ENCODE measurements at regions of chr2 and their contacts with region 1.

Region 1: DNA sequence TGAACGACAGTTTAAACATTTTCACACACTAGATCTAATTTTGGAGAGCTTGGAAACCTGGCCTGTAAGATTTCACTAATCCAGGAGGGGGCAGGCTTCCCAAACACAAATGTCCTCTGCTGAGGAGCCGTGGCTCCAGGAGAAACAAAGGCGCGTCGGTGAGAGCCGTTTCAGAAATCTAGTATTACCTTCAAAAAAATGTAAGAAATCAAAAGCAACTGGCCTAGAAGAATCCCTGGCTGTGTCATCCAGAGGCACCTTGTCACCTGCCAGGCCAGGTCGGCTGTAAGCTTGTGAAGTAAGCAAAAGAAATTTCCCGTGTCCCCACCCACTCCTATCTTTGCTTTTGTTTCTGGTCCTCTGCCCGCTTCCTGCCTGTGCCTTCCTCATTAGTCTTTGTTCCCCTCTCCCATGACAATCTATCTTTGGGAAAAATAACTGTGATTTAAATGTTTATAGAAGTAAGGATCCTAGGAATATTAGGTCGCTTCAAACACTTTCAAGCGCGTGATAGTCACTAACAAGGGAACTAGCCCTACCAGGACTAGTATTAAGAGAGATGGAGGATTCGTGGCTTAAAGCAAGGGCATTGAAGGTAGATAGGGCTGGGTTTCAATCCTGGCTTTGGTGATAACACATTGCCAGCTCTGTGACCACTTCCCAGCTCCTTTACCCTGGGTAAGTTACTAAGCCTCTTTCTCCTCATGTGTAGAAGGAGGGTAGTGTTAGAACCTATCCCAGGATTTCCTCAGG is 99.5 kb upstream of the STK39 start:
- DNase-seq: peak; percentile 80
- ATAC-seq: peak; percentile 85
- H3K4me3 Mint-ChIP-seq: peak overlapping the region; percentile 76
- H3K27ac Mint-ChIP-seq: peak overlapping the region; percentile 5
- H3K4me1 Mint-ChIP-seq: peaks cover 5% of the 10 kb centered on the region
- H3K27me3 Mint-ChIP-seq: peaks cover 3% of the 10 kb centered on the region

Region 2: GRCh38 chr2:168090366-168091135 is 256.4 kb before region 1 on chr2:
- CTCF ChIA-PET with region 1: no interaction called
- POLR2A ChIA-PET with region 1: no interaction called
- DNase-seq: no peak
- ATAC-seq: no peak
- H3K4me3 Mint-ChIP-seq: no peak overlapping the region
- H3K27ac Mint-ChIP-seq: no peak overlapping the region
- H3K4me1 Mint-ChIP-seq: peaks cover 20% of the 10 kb centered on the region
- H3K27me3 Mint-ChIP-seq: no peaks in the 10 kb centered on the region

Region 3: GRCh38 chr2:168336864-168337263 is 10.0 kb before region 1 on chr2:
- CTCF ChIA-PET with region 1: interaction called, 41 read pairs
- POLR2A ChIA-PET with region 1: no interaction called
- DNase-seq: peak; percentile 62
- ATAC-seq: peak; percentile 90
- H3K4me3 Mint-ChIP-seq: no peak overlapping the region
- H3K27ac Mint-ChIP-seq: no peak overlapping the region
- H3K4me1 Mint-ChIP-seq: no peaks in the 10 kb centered on the region
- H3K27me3 Mint-ChIP-seq: no peaks in the 10 kb centered on the region

Region 4: GRCh38 chr2:168687314-168687713 is 340.4 kb after region 1 on chr2:
- CTCF ChIA-PET with region 1: interaction called, 46 read pairs
- POLR2A ChIA-PET with region 1: no interaction called
- DNase-seq: no peak
- ATAC-seq: no peak
- H3K4me3 Mint-ChIP-seq: no peak overlapping the region
- H3K27ac Mint-ChIP-seq: no peak overlapping the region
- H3K4me1 Mint-ChIP-seq: no peaks in the 10 kb centered on the region
- H3K27me3 Mint-ChIP-seq: no peaks in the 10 kb centered on the region

Region 5: GRCh38 chr2:168751104-168751740 is 404.3 kb after region 1 on chr2:
- CTCF ChIA-PET with region 1: interaction called, 20 read pairs
- POLR2A ChIA-PET with region 1: no interaction called
- DNase-seq: peak; percentile 61
- ATAC-seq: peak; percentile 89
- H3K4me3 Mint-ChIP-seq: peak overlapping the region; percentile 24
- H3K27ac Mint-ChIP-seq: peak overlapping the region; percentile 76
- H3K4me1 Mint-ChIP-seq: peaks cover 35% of the 10 kb centered on the region
- H3K27me3 Mint-ChIP-seq: no peaks in the 10 kb centered on the region

Region 6: DNA sequence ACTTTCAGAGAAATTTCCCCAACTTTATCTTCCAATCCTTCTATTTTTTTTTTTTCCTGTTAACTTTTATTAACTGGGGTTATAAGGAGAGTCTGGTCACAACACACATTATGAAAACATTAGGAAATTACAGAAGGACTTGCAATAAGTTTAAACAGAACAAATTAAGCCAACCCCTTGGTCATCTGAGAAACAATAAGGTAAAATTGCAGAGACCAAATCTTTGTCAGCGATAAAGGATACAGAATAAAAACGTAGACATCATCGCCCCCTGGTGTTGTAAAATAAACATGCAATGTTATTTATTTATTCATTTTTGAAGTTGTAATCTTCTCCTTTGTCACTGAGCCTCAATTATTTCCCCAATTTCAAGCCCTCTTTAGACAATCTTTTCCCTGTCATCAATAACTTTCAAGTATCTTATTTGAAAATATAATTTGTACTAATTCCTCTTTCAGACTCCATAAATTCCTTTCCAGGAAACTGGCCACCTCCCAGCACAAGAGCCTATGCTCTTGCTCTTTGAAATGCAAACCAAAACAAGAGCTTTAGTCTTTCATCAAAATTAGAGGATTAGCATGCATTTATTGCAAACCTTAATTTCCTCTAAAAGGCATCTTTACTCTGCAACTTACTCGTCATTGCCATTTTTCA is 573.7 kb after region 1 on chr2:
- CTCF ChIA-PET with region 1: interaction called, 15 read pairs
- POLR2A ChIA-PET with region 1: no interaction called
- DNase-seq: peak; percentile 30
- ATAC-seq: no peak
- H3K4me3 Mint-ChIP-seq: no peak overlapping the region
- H3K27ac Mint-ChIP-seq: no peak overlapping the region
- H3K4me1 Mint-ChIP-seq: peaks cover 9% of the 10 kb centered on the region
- H3K27me3 Mint-ChIP-seq: peaks cover 16% of the 10 kb centered on the region

Measured in activated CD8-positive, alpha-beta T cell treated with anti-CD3 and anti-CD28 coated beads, Interleukin-2, amount 10 ng/mL, durations not matched to agents 7 days and 5 days (primary cell).